Naive thymus-derived CD4-positive, alpha-beta T cell (primary cell): ENCODE measurements at regions of chr5 and their contacts with region 1.

Region 1: GRCh38 chr5:18699681-18700080 is 1065.4 kb downstream of the TAF11L14 start:
- DNase-seq: no peak
- ATAC-seq: no peak
- H3K4me3 ChIP-seq: no peak overlapping the region
- H3K4me3 Mint-ChIP-seq: no peak overlapping the region
- H3K27ac ChIP-seq: no peak overlapping the region
- H3K27ac Mint-ChIP-seq: no peak overlapping the region
- H3K4me1 ChIP-seq: peaks cover 0 to 6% of the 10 kb centered on the region in 2 donors
- H3K4me1 Mint-ChIP-seq: peaks cover 7 to 21% (median 13%) of the 10 kb centered on the region in 7 donors
- H3K27me3 ChIP-seq: no peaks in the 10 kb centered on the region
- H3K27me3 Mint-ChIP-seq: no peaks in the 10 kb centered on the region

Region 2: GRCh38 chr5:18393589-18394442 is 305.9 kb before region 1 on chr5:
- CTCF ChIA-PET with region 1: no interaction called
- POLR2A ChIA-PET with region 1: no interaction called
- intact Hi-C with region 1: loop called (anchors 1 to 5 kb)
- DNase-seq: peak in 4 of 9 donors; percentile 1 to 45 (median 9)
- ATAC-seq: no peak
- H3K4me3 ChIP-seq: no peak overlapping the region
- H3K4me3 Mint-ChIP-seq: no peak overlapping the region
- H3K27ac ChIP-seq: no peak overlapping the region
- H3K27ac Mint-ChIP-seq: no peak overlapping the region
- H3K4me1 ChIP-seq: no peaks in the 10 kb centered on the region
- H3K4me1 Mint-ChIP-seq: no peaks in the 10 kb centered on the region
- H3K27me3 ChIP-seq: no peaks in the 10 kb centered on the region
- H3K27me3 Mint-ChIP-seq: no peaks in the 10 kb centered on the region

Region 3: DNA sequence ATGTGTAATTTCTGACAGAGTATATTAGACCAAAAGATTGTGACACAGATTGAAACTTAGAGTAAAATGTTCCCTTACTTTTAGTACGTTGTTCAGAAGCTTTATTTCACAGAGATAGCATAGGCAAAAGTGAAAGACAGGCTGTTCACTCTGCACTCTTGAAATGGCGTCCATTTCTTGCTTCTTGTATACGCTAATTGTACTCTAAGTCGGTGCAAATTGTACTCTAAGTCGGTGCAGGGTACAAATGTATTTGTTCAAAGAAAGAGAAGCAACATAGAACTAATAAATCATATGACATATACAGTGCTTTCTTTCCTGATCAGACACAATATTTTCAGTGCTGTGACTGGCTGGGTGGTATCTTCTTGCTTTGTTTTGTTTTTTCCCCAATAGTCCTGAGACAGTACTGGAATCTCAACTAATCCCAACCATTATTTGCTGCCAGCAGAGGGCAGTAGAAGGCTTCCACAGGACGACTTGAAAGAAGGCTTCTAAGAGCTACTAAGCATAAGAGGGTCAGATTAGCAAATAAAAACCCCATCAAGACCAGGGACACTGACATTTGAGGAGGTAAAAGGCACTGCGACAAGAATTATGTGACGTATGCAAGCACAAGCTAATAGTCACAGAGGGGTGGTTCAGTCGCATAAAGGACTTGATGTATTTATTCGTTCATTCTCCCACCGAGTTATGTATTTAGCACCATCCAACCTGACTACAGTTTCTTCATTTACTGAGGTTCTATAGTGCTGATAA is 233.7 kb before region 1 on chr5:
- CTCF ChIA-PET with region 1: no interaction called
- POLR2A ChIA-PET with region 1: no interaction called
- intact Hi-C with region 1: loop called in 1 of 2 experiments (anchors 1 kb)
- DNase-seq: peak in 1 of 9 donors; percentile 32
- ATAC-seq: peak; percentile 34
- H3K4me3 ChIP-seq: no peak overlapping the region
- H3K4me3 Mint-ChIP-seq: no peak overlapping the region
- H3K27ac ChIP-seq: no peak overlapping the region
- H3K27ac Mint-ChIP-seq: no peak overlapping the region
- H3K4me1 ChIP-seq: no peaks in the 10 kb centered on the region
- H3K4me1 Mint-ChIP-seq: no peaks in the 10 kb centered on the region
- H3K27me3 ChIP-seq: no peaks in the 10 kb centered on the region
- H3K27me3 Mint-ChIP-seq: no peaks in the 10 kb centered on the region

Region 4: GRCh38 chr5:18745646-18746615 is 46.2 kb after region 1 on chr5:
- CTCF ChIA-PET with region 1: no interaction called
- POLR2A ChIA-PET with region 1: no interaction called
- intact Hi-C with region 1: loop called (anchors 1 kb)
- DNase-seq: peak in 8 of 9 donors; percentile 41 to 70 (median 62)
- ATAC-seq: peak; percentile 85
- H3K4me3 ChIP-seq: peak overlapping the region; percentile 98
- H3K4me3 Mint-ChIP-seq: peak overlapping the region; percentile 89 to 97 (median 96)
- H3K27ac ChIP-seq: peak overlapping the region; percentile 79
- H3K27ac Mint-ChIP-seq: peak overlapping the region; percentile 90 to 99 (median 95)
- H3K4me1 ChIP-seq: peaks cover 25 to 29% of the 10 kb centered on the region in 2 donors
- H3K4me1 Mint-ChIP-seq: peaks cover 25 to 54% (median 52%) of the 10 kb centered on the region in 7 donors
- H3K27me3 ChIP-seq: no peaks in the 10 kb centered on the region
- H3K27me3 Mint-ChIP-seq: no peaks in the 10 kb centered on the region